ENCODE measurements at regions of chr10 and their contacts with region 1.

Region 1: DNA sequence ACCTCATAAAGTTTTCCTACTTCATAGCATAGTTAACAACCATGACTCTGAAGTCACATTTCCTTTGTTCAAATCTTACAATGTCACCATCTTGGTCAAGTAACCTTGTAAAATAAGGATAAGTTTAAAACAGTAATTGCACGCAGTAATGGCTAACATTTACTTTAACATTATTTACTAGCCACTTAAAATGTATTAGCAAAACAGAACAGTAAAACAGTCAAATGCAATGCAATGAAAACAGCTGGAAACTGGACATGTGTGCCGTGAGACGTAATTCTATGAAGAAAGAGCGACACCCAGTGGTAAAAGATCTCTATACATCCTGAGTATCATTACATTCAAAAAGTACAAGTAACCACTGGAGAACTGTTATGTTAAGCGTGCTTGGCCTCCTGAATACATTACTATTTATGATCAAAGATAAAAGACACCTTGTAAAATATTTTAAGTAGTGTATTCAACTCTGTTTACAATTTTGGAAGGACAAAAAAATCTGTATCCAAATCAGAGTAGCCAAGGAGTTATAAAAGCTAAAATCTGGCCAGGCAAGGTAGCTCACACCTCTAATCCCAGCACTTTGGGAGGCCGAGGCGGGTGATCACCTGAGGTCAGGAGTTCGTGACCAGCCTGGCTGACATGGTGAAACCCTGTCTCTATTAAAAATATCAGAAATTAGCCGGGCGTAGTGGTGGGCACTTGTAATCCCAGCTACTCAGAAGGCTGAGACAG is 27.2 kb downstream of the ATE1 start:
- DNase-seq: no peak
- ATAC-seq: peak; percentile 97
- H3K4me3 ChIP-seq: no peak overlapping the region
- H3K27ac ChIP-seq: no peak overlapping the region
- H3K4me1 ChIP-seq: no peaks in the 10 kb centered on the region
- H3K27me3 ChIP-seq: no peaks in the 10 kb centered on the region
- CTCF ChIP-seq: peak; percentile 53 to 64 (median 63); a peak in 5 of 6 replicates
- EP300 ChIP-seq: no peak
- POLR2A ChIP-seq: no peak
- RAD21 ChIP-seq: peak; percentile 76

Region 2: GRCh38 chr10:121608469-121609190 is 292.0 kb before region 1 on chr10:
- CTCF ChIA-PET with region 1: no interaction called
- POLR2A ChIA-PET with region 1: no interaction called
- RAD21 ChIA-PET with region 1: interaction called, 8 read pairs
- SMC1A ChIA-PET with region 1: no interaction called
- in situ Hi-C with region 1: no loop called
- intact Hi-C with region 1: loop called (anchors 2 kb)
- DNase-seq: no peak
- ATAC-seq: peak; percentile 97
- H3K4me3 ChIP-seq: no peak overlapping the region
- H3K27ac ChIP-seq: no peak overlapping the region
- H3K4me1 ChIP-seq: no peaks in the 10 kb centered on the region
- H3K27me3 ChIP-seq: no peaks in the 10 kb centered on the region
- CTCF ChIP-seq: peak; percentile 59 to 74 (median 62); a peak in 5 of 6 replicates
- EP300 ChIP-seq: no peak
- POLR2A ChIP-seq: no peak
- RAD21 ChIP-seq: peak; percentile 65

Region 3: GRCh38 chr10:121753726-121754476 is 146.7 kb before region 1 on chr10:
- CTCF ChIA-PET with region 1: no interaction called
- POLR2A ChIA-PET with region 1: no interaction called
- RAD21 ChIA-PET with region 1: no interaction called
- SMC1A ChIA-PET with region 1: no interaction called
- in situ Hi-C with region 1: no loop called
- intact Hi-C with region 1: loop called (anchors 5 kb)
- DNase-seq: peak; percentile 46
- ATAC-seq: peak; percentile 95
- H3K4me3 ChIP-seq: no peak overlapping the region
- H3K27ac ChIP-seq: peak overlapping the region; percentile 62
- H3K4me1 ChIP-seq: peaks cover 8% of the 10 kb centered on the region
- H3K27me3 ChIP-seq: no peaks in the 10 kb centered on the region
- CTCF ChIP-seq: peak; percentile 7 to 31 (median 27); a peak in 2 of 6 replicates
- EP300 ChIP-seq: no peak; a peak in 1 of 4 replicates
- POLR2A ChIP-seq: no peak
- RAD21 ChIP-seq: peak; percentile 34; the same call in 1 of the 2 replicates

Region 4: DNA sequence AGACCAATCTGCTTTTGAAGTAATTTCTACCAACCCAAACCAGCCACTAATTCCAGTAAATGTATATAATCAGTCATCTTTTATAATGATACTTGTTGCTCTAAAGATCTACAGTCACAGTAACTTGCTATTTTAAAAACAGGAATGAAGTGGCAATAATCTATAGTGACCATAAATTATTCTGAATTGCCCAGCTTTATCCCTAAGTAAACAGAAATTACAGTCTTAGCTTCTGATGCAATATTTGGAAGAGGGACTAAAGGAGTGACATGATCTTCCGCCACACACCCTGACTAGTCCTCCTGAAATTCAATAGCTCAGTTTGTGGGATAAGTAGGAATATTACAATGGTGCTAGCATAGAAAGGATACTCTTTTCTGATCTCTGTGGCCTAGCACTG is 68.8 kb before region 1 on chr10:
- CTCF ChIA-PET with region 1: interaction called, 81 read pairs
- POLR2A ChIA-PET with region 1: no interaction called
- RAD21 ChIA-PET with region 1: no interaction called
- SMC1A ChIA-PET with region 1: no interaction called
- in situ Hi-C with region 1: no loop called
- intact Hi-C with region 1: no loop called
- DNase-seq: no peak
- ATAC-seq: no peak
- H3K4me3 ChIP-seq: no peak overlapping the region
- H3K27ac ChIP-seq: no peak overlapping the region
- H3K4me1 ChIP-seq: no peaks in the 10 kb centered on the region
- H3K27me3 ChIP-seq: no peaks in the 10 kb centered on the region
- CTCF ChIP-seq: no peak
- EP300 ChIP-seq: no peak
- POLR2A ChIP-seq: no peak
- RAD21 ChIP-seq: no peak

Region 5: GRCh38 chr10:121886997-121887622 is 13.5 kb before region 1 on chr10:
- CTCF ChIA-PET with region 1: interaction called, 32 read pairs
- POLR2A ChIA-PET with region 1: no interaction called
- RAD21 ChIA-PET with region 1: interaction called, 3 read pairs
- SMC1A ChIA-PET with region 1: interaction called, 3 read pairs
- in situ Hi-C with region 1: no loop called
- intact Hi-C with region 1: no loop called
- DNase-seq: no peak
- ATAC-seq: peak; percentile 88
- H3K4me3 ChIP-seq: no peak overlapping the region
- H3K27ac ChIP-seq: no peak overlapping the region
- H3K4me1 ChIP-seq: no peaks in the 10 kb centered on the region
- H3K27me3 ChIP-seq: no peaks in the 10 kb centered on the region
- CTCF ChIP-seq: peak; percentile 65 to 68 (median 67); a peak in 5 of 6 replicates
- EP300 ChIP-seq: no peak
- POLR2A ChIP-seq: no peak
- RAD21 ChIP-seq: peak; percentile 54

Region 6: DNA sequence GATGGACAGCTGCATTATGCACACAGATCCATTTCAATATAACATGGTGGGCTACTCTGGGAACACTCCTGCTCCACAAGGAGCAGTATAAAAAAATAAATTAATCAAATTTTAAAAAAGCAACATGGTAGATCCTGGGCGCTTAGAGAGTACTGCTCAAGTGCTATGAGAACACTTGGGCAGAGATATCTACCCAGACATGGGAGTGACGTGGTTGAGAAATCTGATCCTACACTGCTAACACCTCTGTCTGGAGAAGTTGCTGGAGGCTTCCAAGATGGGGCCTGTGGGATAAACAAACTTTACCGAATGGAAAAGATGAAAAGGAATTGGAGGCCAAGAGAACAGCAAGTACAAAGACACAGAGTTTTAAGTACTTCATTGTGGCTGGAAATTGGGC is 65.4 kb after region 1 on chr10:
- CTCF ChIA-PET with region 1: no interaction called
- POLR2A ChIA-PET with region 1: no interaction called
- RAD21 ChIA-PET with region 1: no interaction called
- SMC1A ChIA-PET with region 1: no interaction called
- in situ Hi-C with region 1: no loop called
- intact Hi-C with region 1: no loop called
- DNase-seq: no peak
- ATAC-seq: no peak
- H3K4me3 ChIP-seq: no peak overlapping the region
- H3K27ac ChIP-seq: no peak overlapping the region
- H3K4me1 ChIP-seq: no peaks in the 10 kb centered on the region
- H3K27me3 ChIP-seq: no peaks in the 10 kb centered on the region
- CTCF ChIP-seq: no peak
- EP300 ChIP-seq: no peak
- POLR2A ChIP-seq: no peak
- RAD21 ChIP-seq: no peak

Region 7: DNA sequence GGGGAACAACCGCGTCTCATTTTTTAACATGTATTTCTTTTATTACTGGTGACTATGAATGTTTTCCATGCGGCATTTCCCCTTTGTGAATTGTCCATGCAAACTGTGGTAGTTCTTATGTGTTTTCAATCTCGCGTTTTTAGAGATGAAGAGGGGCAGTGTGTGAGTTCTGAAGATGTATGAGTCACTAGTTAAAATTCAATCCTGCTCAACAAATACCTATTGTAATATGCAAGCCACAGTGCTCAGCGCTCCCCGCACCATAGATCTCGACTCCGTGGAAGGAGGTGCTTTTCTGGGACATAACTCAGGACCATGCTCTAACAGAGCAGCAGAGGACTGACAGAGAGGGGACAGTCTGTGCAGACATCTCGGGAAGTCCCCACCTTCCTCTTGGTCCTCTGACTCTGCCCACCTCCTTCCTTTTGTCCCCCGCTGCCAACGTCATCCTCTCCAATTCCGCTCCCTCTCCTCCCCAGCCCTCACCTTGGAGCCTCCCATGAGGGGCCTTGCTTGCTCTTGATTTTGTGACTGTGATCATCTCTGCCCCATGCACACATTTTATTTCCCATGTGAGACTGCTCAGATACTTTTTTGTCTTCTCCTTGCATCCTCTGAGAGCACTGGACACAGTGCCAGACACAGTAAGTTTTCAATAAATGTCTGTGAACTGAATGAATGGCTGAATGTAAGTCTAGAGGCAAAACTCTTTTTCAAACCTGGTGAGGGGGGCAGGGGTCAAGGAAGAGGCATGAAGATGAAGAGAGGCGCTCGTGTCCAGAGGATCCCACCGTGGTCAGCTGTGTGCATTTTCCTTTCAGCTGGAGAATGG is 431.2 kb after region 1 on chr10:
- CTCF ChIA-PET with region 1: no interaction called
- POLR2A ChIA-PET with region 1: no interaction called
- RAD21 ChIA-PET with region 1: no interaction called
- SMC1A ChIA-PET with region 1: no interaction called
- in situ Hi-C with region 1: no loop called
- intact Hi-C with region 1: no loop called
- DNase-seq: no peak
- ATAC-seq: no peak
- H3K4me3 ChIP-seq: no peak overlapping the region
- H3K27ac ChIP-seq: no peak overlapping the region
- H3K4me1 ChIP-seq: peaks cover 2% of the 10 kb centered on the region
- H3K27me3 ChIP-seq: peaks cover 0 to 3% of the 10 kb centered on the region in 2 experiments; a peak in 1 of 4 replicates
- CTCF ChIP-seq: no peak
- EP300 ChIP-seq: no peak
- POLR2A ChIP-seq: no peak
- RAD21 ChIP-seq: no peak

Measured in GM12878 (cell line).